ENCODE measurements at regions of chr7 and their contacts with region 1.

Region 1: GRCh38 chr7:112449902-112450806 is at the start of gene IFRD1:
- DNase-seq: peak; percentile 95 to 100
- H3K4me3 ChIP-seq: peak within 1 kb of the TSS; percentile 78 to 96
- H3K27ac ChIP-seq: peak within 1 kb of the TSS; percentile 97 to 99
- H3K4me1 ChIP-seq: peaks cover 0 to 6% of the 10 kb centered on the region in 2 donors
- H3K27me3 ChIP-seq: no peaks in the 10 kb centered on the region
- CTCF ChIP-seq: no peak
- total RNA-seq, gene IFRD1: 35.1 TPM

Region 2: DNA sequence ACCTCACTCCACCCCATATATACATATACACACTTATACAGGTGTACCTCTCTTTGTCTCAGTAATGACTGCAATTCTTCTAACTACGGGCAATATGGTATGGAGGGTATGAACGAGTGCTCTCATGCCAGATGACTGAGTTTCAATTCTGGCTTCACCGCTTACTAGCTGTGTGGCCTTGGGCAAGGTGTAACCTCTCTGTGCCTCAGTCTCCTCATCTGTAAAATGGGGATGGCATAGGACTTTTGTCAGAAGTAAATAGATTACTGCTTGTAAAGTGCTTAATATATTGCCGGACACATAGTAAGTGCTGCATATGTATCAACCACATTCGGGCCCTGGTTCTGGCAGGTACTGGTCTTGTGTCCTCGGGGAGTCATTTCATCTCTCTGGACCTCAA is 60.0 kb before region 1 on chr7:
- intact Hi-C with region 1: loop called (anchors 5 kb)
- DNase-seq: no peak
- H3K4me3 ChIP-seq: no peak overlapping the region
- H3K27ac ChIP-seq: no peak overlapping the region
- H3K4me1 ChIP-seq: peaks cover 0 to 3% of the 10 kb centered on the region in 2 donors
- H3K27me3 ChIP-seq: no peaks in the 10 kb centered on the region
- CTCF ChIP-seq: no peak

Region 3: DNA sequence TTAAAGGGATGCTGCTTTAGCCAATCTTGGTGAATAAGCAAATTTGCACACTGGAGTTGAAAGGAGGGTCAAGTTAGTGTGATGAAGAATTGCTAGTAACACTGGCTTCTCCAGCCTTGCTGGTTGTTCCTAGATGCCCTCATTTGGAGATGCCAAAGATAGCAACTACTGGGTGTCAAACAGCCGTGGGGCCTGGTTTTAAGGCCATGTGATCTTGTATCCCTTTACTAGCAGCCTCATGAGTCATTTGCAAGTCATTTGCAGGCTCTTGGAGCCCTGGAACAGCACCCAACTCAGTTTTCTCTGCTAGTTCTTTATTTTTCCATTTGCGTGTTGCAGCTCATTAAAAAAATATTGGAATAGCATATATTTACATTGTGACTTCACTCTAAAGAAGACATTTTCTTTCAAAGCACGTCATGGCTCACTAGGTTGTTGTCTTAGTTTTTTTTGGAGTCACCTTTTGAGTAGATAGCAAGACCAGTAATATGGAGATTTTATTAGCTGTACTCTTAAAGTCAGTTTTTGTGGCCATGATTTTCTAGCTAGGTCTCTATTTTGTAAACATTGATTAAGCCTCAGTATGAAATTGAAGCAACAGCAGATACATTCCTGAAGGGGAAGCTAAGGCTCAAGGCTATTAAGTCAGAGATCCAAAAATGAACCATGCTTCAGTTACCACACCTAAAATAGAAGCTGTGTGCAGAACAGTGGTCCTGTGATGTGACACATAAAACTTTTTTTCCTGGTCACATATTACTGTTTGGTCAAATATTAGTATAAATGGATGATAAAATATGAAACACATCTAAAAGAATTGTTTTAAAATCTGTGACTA is 31.9 kb after region 1 on chr7:
- intact Hi-C with region 1: loop called (anchors 1 kb)
- DNase-seq: peak; percentile 77 to 94
- H3K4me3 ChIP-seq: no peak overlapping the region
- H3K27ac ChIP-seq: peak overlapping the region; percentile 81
- H3K4me1 ChIP-seq: peaks cover 4 to 35% of the 10 kb centered on the region in 2 donors
- H3K27me3 ChIP-seq: no peaks in the 10 kb centered on the region
- CTCF ChIP-seq: no peak